Activated naive CD8-positive, alpha-beta T cell treated with anti-CD3 and anti-CD28 coated beads, Interleukin-2, amount 10 ng/mL, durations not matched to agents 7 days and 5 days (primary cell): ENCODE measurements at regions of chr15 and their contacts with region 1.

Region 1: GRCh38 chr15:79923515-79924395 is 26.9 kb upstream of the MTHFS start:
- DNase-seq: peak; percentile 100
- ATAC-seq: peak; percentile 94
- H3K4me3 Mint-ChIP-seq: peak overlapping the region; percentile 90
- H3K27ac Mint-ChIP-seq: peak overlapping the region; percentile 95
- H3K4me1 Mint-ChIP-seq: peaks cover 18% of the 10 kb centered on the region
- H3K27me3 Mint-ChIP-seq: peaks cover 3% of the 10 kb centered on the region

Region 2: DNA sequence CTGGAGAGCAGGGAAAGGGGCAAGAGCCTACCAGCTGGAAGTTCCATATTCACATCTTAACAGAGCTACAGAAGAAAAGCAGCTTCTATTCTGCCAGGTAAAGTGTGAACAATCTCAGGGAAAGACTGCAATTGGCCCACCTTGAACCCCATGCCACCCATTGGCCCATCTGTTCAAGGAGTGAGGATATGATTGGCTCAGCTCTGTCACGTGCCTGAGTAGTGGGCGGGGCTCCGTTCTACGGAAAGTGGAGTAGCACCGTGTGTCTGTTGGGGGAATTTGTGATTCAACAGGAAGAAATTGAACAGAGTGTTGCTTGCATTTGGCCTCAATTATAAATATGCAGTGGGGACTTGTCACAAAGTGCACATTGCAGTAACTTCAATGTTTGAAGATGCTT is 409.8 kb before region 1 on chr15:
- POLR2A ChIA-PET with region 1: no interaction called
- DNase-seq: no peak
- ATAC-seq: no peak
- H3K4me3 Mint-ChIP-seq: no peak overlapping the region
- H3K27ac Mint-ChIP-seq: no peak overlapping the region
- H3K4me1 Mint-ChIP-seq: no peaks in the 10 kb centered on the region
- H3K27me3 Mint-ChIP-seq: peaks cover 9% of the 10 kb centered on the region

Region 3: DNA sequence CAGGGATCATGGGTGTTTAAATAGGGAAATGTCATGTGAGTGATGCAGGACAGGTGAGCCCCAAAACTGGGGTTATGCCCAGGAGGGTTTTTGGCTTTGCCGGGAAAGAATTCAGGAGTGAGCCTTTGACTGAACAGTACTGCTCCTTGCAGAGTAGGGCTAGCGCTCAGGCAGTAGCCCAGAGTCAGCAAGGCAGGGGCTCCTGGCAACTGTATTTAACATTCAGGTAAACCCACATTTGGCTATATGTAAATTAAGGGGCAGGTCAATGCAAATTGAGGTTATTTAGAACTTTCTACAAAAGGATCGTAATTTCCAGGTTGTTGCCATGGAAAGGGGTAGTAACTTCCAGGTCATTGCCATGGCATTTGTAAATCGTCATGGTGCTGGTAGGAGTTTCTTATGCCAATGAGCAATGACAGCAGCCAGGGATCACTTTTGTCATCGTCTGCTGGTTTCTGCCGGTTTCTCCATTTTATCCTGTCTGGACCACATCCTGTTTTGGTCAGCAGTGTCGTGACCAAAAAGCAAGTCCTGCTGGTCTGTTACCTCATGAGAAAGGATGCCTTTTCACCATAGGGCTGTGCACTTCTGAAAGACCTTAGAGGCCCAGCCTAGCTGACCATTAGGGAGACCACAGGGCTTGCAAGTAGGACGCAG is 51.3 kb before region 1 on chr15:
- POLR2A ChIA-PET with region 1: interaction called, 15 read pairs
- DNase-seq: no peak
- ATAC-seq: peak; percentile 60
- H3K4me3 Mint-ChIP-seq: no peak overlapping the region
- H3K27ac Mint-ChIP-seq: peak overlapping the region; percentile 38
- H3K4me1 Mint-ChIP-seq: peaks cover 15% of the 10 kb centered on the region
- H3K27me3 Mint-ChIP-seq: no peaks in the 10 kb centered on the region

Region 4: DNA sequence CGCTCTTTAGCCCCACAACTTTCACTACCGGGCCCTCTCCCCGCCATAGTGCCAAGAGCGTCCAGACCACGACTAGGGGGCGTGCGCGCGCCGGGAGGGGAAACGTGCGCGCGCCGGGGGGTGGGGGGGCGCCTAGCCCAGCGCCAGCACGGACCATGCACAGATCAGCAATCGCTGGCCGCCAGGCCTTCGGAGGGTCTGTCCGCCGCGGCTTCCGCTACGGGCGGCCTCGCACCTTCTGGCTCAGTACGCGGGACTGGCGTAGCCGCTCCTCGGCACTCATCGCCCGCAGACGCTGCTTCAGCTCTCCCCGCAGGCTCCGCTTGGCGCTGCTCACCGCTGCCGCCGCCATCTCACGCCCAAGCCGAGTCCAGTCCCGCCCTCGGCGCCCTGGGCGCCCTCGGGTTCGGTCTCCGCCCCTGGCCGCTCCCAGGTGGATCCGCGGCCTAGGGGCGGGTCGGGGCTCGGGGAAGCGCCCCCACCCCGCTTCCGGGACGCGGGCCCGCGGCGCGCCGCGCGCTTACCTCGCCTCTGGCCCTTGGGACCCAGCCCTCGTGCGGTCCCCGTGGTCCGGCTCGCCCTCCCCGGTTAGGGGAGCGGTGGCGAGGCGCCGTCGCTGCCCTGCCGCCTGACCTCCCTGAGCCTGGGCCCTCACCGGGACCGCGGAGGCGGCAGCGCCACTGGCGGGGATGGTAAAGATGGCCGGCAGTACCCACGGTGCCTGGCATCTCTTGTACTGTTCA is 26.9 kb before region 1 on chr15 and contains the start of gene MTHFS:
- POLR2A ChIA-PET with region 1: interaction called, 94 read pairs
- DNase-seq: peak; percentile 85
- ATAC-seq: peak; percentile 87
- H3K4me3 Mint-ChIP-seq: peak within 1 kb of the TSS; percentile 95
- H3K27ac Mint-ChIP-seq: peak within 1 kb of the TSS; percentile 96
- H3K4me1 Mint-ChIP-seq: peaks cover 25% of the 10 kb centered on the region
- H3K27me3 Mint-ChIP-seq: no peaks in the 10 kb centered on the region
- total RNA-seq, gene MTHFS: 31.5 to 32.0 TPM

Region 5: GRCh38 chr15:79901958-79902357 is 21.8 kb before region 1 on chr15:
- POLR2A ChIA-PET with region 1: interaction called, 94 read pairs
- DNase-seq: no peak
- ATAC-seq: no peak
- H3K4me3 Mint-ChIP-seq: no peak overlapping the region
- H3K27ac Mint-ChIP-seq: no peak overlapping the region
- H3K4me1 Mint-ChIP-seq: peaks cover 24% of the 10 kb centered on the region
- H3K27me3 Mint-ChIP-seq: no peaks in the 10 kb centered on the region

Region 6: DNA sequence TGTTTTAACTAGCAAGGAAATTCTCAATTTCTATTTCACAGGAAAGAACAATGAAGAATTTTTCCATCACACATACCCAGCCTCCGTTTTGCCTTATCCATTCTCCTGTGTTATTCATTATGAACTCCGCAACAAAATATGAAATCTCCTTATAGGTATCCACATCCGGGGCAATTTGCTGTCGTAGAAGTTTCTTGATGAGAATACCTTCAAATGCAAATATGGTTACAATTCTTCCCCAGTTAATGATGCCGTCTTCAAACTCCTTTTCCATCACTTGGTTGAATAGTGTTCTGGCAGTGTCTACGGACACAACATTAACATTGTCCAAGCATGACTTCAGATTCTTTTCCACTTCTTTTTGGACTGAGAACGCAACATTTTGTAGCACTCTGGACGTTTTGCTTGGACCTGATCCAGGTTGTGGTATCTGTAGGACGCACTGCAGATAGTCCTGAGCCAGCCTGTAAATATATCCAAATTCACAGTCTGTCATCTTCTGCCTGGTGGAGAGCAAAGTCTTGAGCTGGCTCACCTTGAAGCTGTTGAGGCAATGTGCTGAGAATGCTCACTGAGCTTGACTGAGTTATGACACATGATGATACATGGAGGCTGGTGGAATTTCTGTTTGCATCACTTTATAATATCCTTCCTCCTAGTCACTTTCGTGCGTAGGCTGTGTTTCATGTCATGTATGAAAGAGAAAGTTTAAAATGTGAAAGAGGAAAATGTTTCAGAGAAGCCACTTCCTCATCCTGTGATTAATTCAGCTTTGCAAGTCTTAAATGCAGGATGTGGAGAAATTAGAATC is 47.1 kb after region 1 on chr15 and contains the start of gene BCL2A1:
- POLR2A ChIA-PET with region 1: interaction called, 92 read pairs
- DNase-seq: peak; percentile 48
- ATAC-seq: peak; percentile 75
- H3K4me3 Mint-ChIP-seq: peak within 1 kb of the TSS; percentile 95
- H3K27ac Mint-ChIP-seq: peak within 1 kb of the TSS; percentile 96
- H3K4me1 Mint-ChIP-seq: peaks cover 44% of the 10 kb centered on the region
- H3K27me3 Mint-ChIP-seq: no peaks in the 10 kb centered on the region
- total RNA-seq, gene BCL2A1: 33.6 to 34.6 TPM

Region 7: GRCh38 chr15:80636675-80637074 is 712.9 kb after region 1 on chr15:
- POLR2A ChIA-PET with region 1: no interaction called
- DNase-seq: no peak
- ATAC-seq: no peak
- H3K4me3 Mint-ChIP-seq: no peak overlapping the region
- H3K27ac Mint-ChIP-seq: no peak overlapping the region
- H3K4me1 Mint-ChIP-seq: no peaks in the 10 kb centered on the region
- H3K27me3 Mint-ChIP-seq: peaks cover 16% of the 10 kb centered on the region